GM12878 (cell line): ENCODE measurements at regions of chr3 and their contacts with region 1.

Region 1: DNA sequence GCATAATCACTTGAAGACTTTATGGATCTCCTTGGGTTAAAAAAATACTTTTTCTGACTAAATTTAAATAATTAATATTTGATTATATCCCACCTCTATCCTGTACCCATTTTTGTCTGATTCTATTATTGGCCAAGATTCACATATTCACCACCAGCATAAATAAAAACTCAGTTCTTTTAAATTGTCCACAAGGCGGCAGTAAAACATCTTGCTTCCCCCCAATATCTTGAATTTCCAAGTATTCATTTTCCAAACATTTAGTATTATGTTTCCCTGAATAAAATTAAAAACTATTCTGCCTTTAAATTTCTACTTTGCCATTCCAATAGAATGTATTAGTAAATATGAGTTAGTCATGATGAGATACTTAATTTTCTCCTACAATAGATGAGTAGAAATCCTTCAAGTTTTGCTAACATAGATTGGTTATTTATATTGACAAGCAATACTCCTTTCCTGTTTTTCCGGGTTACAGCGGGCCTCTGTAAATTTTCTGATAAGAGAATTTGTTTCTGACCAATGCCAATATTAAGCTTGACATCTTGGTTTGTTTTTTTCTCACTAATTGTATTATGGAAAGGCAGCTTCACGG is 218.7 kb upstream of the MDFIC2 start:
- DNase-seq: no peak
- ATAC-seq: no peak
- H3K4me3 ChIP-seq: no peak overlapping the region
- H3K27ac ChIP-seq: no peak overlapping the region
- H3K4me1 ChIP-seq: no peaks in the 10 kb centered on the region
- H3K27me3 ChIP-seq: no peaks in the 10 kb centered on the region
- CTCF ChIP-seq: peak; percentile 29 to 46 (median 43); a peak in 4 of 6 replicates
- EP300 ChIP-seq: no peak
- POLR2A ChIP-seq: no peak
- RAD21 ChIP-seq: peak; percentile 53

Region 2: GRCh38 chr3:70684701-70685100 is 153.5 kb after region 1 on chr3:
- CTCF ChIA-PET with region 1: no interaction called
- POLR2A ChIA-PET with region 1: no interaction called
- RAD21 ChIA-PET with region 1: no interaction called
- SMC1A ChIA-PET with region 1: no interaction called
- in situ Hi-C with region 1: no loop called
- intact Hi-C with region 1: no loop called
- DNase-seq: no peak
- ATAC-seq: no peak
- H3K4me3 ChIP-seq: no peak overlapping the region
- H3K27ac ChIP-seq: no peak overlapping the region
- H3K4me1 ChIP-seq: no peaks in the 10 kb centered on the region
- H3K27me3 ChIP-seq: no peaks in the 10 kb centered on the region
- CTCF ChIP-seq: no peak
- EP300 ChIP-seq: no peak
- POLR2A ChIP-seq: no peak
- RAD21 ChIP-seq: no peak

Region 3: DNA sequence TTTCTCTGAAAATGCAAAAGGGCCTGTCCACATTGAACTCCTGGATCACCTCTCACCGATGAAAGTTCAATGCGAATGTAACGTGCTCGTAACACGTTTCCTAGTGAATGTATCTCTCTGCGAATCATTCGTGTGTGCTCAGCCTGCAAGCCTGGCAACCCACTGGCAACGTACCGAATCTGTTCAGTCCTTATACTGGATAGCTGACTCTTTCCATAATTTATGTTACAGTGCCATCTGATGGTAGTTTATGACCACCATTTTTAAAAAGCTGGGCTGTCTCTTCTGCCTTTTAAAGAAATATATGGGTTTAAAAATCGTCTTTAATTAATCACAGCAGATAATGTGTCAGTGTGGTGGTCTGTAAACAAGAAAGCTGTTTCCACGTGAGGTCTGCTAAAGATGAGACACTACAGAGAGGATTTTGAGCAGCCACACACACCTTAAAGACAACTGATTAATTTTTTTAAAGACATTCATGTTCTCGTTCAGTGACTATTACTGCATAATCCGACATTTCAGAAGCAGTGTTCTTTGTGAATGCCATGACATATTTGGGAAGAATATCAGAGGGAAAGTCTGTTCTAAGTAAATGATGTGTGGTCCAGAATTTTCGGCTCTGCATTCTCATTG is 1121.7 kb after region 1 on chr3:
- CTCF ChIA-PET with region 1: interaction called, 3 read pairs
- POLR2A ChIA-PET with region 1: no interaction called
- RAD21 ChIA-PET with region 1: no interaction called
- SMC1A ChIA-PET with region 1: no interaction called
- in situ Hi-C with region 1: no loop called
- intact Hi-C with region 1: loop called (anchors 5 kb)
- DNase-seq: peak; percentile 4
- ATAC-seq: peak; percentile 71
- H3K4me3 ChIP-seq: no peak overlapping the region
- H3K27ac ChIP-seq: no peak overlapping the region
- H3K4me1 ChIP-seq: no peaks in the 10 kb centered on the region
- H3K27me3 ChIP-seq: peaks cover 0 to 2% of the 10 kb centered on the region in 2 experiments; a peak in 1 of 4 replicates
- CTCF ChIP-seq: peak in 1 of 3 experiments; percentile 56; a peak in 4 of 6 replicates
- EP300 ChIP-seq: no peak
- POLR2A ChIP-seq: no peak
- RAD21 ChIP-seq: peak; percentile 62